AG04449 (cell line): ENCODE measurements at regions of chr2 and their contacts with region 1.

Region 1: GRCh38 chr2:39851651-39852110 is 72.6 kb upstream of the THUMPD2 start:
- DNase-seq: peak; percentile 21
- H3K4me3 ChIP-seq: peak overlapping the region; percentile 20
- CTCF ChIP-seq: peak; percentile 11

Region 2: DNA sequence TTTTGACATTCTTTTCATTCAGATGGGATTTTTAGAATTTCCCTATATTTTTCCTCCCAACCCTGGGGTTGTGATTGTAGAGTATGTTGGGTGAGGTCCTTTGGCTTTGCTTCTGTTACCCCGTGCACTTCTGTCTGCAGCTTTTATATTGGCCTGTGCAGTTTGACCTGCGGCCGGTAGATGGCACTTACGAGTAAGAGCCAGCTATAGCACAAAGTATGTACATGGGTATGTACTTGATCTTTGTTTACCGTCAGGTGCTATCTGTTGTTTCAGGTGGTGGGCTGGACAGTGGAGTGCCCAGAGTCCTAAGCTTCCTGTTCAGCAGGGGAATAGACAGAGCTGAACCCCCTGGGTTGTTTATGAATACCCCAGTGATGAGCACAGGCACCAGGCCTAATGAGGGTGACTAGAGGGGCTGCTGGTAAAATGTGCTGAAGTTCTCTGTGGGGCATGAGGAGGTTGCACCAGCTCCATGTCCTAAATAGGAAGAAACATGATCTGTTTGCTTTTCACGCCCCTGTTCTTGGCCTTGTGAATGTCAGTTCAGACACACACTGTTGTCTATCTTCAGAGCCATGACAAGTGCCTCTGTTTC is 13.7 kb before region 1 on chr2:
- CTCF ChIA-PET with region 1: interaction called, 20 read pairs
- POLR2A ChIA-PET with region 1: no interaction called
- DNase-seq: no peak
- H3K4me3 ChIP-seq: no peak overlapping the region
- CTCF ChIP-seq: peak; percentile 74